Right ventricle myocardium inferior (tissue), 1 donor: ENCODE measurements at regions of chr11 and their contacts with region 1.

Region 1: GRCh38 chr11:117903505-117904392 is 25.5 kb downstream of the TMPRSS13 start:
- DNase-seq: no peak
- ATAC-seq: no peak

Region 2: DNA sequence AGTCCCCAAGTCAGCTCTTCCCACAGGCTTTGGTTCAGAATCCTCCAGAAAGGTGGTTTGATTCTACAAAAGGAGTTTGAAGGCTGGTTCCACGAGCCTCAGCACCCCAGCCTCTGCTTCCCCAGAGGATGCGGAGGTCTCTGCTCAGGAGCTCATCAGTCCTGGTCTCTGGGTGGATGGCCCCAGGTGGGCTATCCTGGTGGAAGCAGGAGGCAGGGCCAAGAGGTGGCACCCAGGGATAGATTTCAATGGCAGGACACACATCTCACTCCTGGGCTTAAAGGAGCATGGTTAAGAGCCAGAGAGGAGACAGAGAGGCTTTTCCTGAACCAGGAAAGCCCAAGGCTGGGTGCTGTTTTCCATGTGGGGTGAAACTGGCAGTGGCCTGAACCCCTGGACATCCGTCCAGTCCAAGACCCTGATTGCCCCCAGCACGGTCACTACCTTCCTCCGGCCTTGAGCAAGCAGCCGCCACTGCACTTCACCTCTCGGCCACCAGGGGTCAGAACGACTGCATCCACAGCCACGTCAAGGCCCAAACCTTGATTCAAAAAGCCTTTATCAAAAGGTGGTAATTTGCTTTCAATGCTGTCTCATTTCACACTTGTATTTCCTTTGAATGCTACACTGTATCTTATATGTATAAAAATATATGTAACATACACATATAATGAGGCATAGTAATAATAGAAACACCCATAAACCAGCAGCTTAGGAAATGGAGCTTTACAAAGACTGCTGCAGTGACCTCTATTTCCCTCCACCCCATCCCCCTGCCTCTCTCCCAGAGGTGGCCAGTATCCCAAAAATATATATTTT is 59.9 kb before region 1 on chr11:
- intact Hi-C with region 1: loop called (anchors 1 kb)
- DNase-seq: peak; percentile 90
- ATAC-seq: peak; percentile 72